Pancreas (tissue), 10 donors: ENCODE measurements at regions of chr6 and their contacts with region 1.

Region 1: GRCh38 chr6:41033776-41034175 is 5.2 kb downstream of the UNC5CL start:
- DNase-seq: no peak
- ATAC-seq: no peak
- H3K4me3 ChIP-seq: no peak overlapping the region
- H3K27ac ChIP-seq: no peak overlapping the region
- H3K4me1 ChIP-seq: peaks cover 13 to 45% (median 26%) of the 10 kb centered on the region in 3 donors
- H3K27me3 ChIP-seq: no peaks in the 10 kb centered on the region
- CTCF ChIP-seq: no peak

Region 2: GRCh38 chr6:41066867-41067304 is 33.1 kb after region 1 on chr6:
- intact Hi-C with region 1: loop called in 1 of 3 experiments (anchors 5 kb)
- DNase-seq: peak; percentile 69 to 85 (median 78)
- ATAC-seq: peak; percentile 30 to 53 (median 46)
- H3K4me3 ChIP-seq: no peak overlapping the region
- H3K27ac ChIP-seq: peak overlapping the region in 2 of 4 donors; percentile 74 to 79
- H3K4me1 ChIP-seq: peaks cover 38 to 57% (median 56%) of the 10 kb centered on the region in 3 donors
- H3K27me3 ChIP-seq: no peaks in the 10 kb centered on the region
- CTCF ChIP-seq: peak; percentile 80 to 83 (median 83)